ENCODE measurements at regions of chr15 and their contacts with region 1.

Region 1: GRCh38 chr15:94230956-94231722 is at the start of gene MCTP2:
- DNase-seq: peak; percentile 96
- H3K4me3 Mint-ChIP-seq: peak within 1 kb of the TSS; percentile 89
- H3K27ac Mint-ChIP-seq: peak within 1 kb of the TSS; percentile 97
- H3K4me1 Mint-ChIP-seq: peaks cover 69% of the 10 kb centered on the region
- H3K27me3 Mint-ChIP-seq: no peaks in the 10 kb centered on the region
- total RNA-seq, gene MCTP2: 49.8 and 58.9 TPM in 2 replicates

Region 2: GRCh38 chr15:92808978-92809879 is 1421.9 kb before region 1 on chr15:
- intact Hi-C with region 1: loop called (anchors 10 kb)
- DNase-seq: peak; percentile 100
- H3K4me3 Mint-ChIP-seq: peak overlapping the region; percentile 89
- H3K27ac Mint-ChIP-seq: peak overlapping the region; percentile 98
- H3K4me1 Mint-ChIP-seq: peaks cover 45% of the 10 kb centered on the region
- H3K27me3 Mint-ChIP-seq: no peaks in the 10 kb centered on the region

Region 3: GRCh38 chr15:93882141-93882540 is 349.0 kb before region 1 on chr15:
- intact Hi-C with region 1: no loop called
- DNase-seq: no peak
- H3K4me3 Mint-ChIP-seq: no peak overlapping the region
- H3K27ac Mint-ChIP-seq: no peak overlapping the region
- H3K4me1 Mint-ChIP-seq: no peaks in the 10 kb centered on the region
- H3K27me3 Mint-ChIP-seq: peaks cover 4% of the 10 kb centered on the region

Region 4: DNA sequence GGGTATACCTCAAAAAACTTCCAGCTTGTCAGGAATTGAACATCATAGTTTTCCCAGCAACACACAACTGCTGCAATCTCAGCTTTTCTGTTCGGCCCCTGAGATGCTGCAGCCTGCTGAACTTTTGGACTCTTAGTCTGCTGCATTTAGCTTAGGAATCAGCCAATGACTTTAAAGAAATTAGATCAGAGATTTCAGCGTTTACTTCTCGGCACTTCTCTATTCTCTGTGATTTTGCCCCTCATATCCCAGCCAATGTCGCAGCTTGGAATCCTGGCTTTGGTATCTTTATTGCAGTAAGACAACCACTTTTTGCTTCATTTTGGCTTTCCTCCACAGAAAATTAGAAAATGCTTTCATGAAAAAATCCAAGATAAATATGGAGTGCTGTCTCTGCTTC is 86.1 kb before region 1 on chr15:
- intact Hi-C with region 1: no loop called
- DNase-seq: no peak
- H3K4me3 Mint-ChIP-seq: no peak overlapping the region
- H3K27ac Mint-ChIP-seq: no peak overlapping the region
- H3K4me1 Mint-ChIP-seq: no peaks in the 10 kb centered on the region
- H3K27me3 Mint-ChIP-seq: peaks cover 38% of the 10 kb centered on the region

Region 5: DNA sequence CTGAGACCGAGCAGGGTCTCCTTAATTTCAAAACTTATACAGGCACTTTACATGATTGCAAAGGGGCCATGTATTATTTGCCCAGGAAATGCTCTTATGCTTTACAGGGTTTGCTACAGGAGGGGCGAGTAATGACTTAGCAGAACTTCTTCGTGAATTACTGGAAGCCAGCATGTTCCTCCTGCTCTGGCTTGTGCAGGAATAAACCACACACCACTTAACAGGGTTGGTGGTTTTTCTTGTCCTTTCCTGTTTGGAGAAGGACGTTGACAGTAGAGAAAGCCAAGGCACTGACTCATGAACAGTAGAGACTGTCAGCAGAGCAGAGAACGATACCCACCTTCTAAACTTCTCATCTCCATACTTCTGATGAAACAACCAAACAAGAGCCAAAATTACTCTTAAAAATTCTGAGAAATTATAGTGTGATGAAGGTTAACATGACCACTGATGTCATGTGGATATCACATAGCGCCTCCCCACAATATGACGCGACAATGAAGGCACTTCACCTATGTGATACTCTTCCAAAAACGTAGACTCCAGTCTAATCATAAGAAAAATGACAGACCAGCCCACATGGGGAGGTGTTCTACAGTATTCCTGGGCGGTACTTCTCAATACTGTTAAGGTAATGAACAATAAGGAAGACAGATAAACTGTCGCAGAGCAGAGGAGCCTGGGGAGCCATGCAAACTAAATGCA is 24.5 kb before region 1 on chr15:
- intact Hi-C with region 1: loop called (anchors 1 kb)
- DNase-seq: peak; percentile 89
- H3K4me3 Mint-ChIP-seq: peak overlapping the region; percentile 80
- H3K27ac Mint-ChIP-seq: peak overlapping the region; percentile 96
- H3K4me1 Mint-ChIP-seq: peaks cover 27% of the 10 kb centered on the region
- H3K27me3 Mint-ChIP-seq: peaks cover 7% of the 10 kb centered on the region

Region 6: DNA sequence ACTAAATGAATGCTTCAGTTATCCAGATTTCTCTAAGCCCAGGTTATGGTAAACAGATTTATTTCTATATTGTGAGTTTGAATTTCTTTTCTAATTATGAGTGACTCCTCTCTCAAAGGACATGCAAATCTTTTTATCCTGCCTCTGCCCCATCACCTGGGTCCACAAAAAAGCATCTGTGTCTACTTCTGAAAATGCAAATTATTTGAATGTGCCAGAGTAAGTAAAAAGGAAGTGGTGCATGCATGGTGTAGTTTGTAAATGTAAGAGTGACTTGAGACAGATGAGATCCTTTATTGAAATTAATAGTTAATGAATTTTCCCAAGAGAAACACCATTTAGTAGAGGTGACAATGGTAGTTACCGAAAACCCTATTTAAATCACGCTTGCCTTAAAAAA is 27.1 kb after region 1 on chr15:
- intact Hi-C with region 1: no loop called
- DNase-seq: peak; percentile 16
- H3K4me3 Mint-ChIP-seq: no peak overlapping the region
- H3K27ac Mint-ChIP-seq: no peak overlapping the region
- H3K4me1 Mint-ChIP-seq: peaks cover 38% of the 10 kb centered on the region
- H3K27me3 Mint-ChIP-seq: no peaks in the 10 kb centered on the region

Region 7: GRCh38 chr15:94287794-94288246 is 56.7 kb after region 1 on chr15:
- intact Hi-C with region 1: loop called (anchors 5 kb)
- DNase-seq: peak; percentile 89
- H3K4me3 Mint-ChIP-seq: peak overlapping the region; percentile 81
- H3K27ac Mint-ChIP-seq: peak overlapping the region; percentile 86
- H3K4me1 Mint-ChIP-seq: peaks cover 43% of the 10 kb centered on the region
- H3K27me3 Mint-ChIP-seq: no peaks in the 10 kb centered on the region

Region 8: DNA sequence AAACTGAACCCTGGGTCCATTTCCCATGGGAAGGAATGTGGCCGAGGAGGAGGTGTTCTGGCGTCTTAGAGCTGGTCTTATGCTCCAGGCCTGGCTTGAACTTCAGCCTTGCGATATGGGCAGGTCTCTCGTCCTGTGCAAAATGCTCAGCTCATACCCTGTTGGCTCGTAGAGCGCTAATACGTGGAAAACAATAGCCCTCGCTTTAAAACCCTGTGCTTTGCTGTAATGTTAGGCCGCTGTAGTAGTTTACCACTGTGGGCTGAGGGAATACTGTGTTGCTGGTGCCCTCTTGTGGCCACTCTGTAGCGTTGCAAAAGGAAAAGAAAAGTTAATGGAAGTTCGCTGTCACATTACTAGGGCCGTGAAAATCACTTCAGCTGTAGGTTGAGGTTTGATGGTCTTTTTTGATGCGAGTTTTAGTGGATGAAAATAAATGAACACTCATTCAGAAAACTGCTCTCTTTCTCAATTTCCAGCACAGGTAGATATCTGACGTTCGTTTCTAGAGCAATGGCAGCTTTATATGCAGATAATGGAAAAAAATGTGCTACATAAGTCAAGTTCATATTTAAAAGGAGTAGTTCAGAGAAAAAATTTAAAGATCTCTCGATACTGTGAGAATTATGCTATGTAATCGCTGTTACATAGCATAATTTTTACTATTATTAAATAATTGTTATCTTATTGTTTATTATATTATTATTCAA is 93.1 kb after region 1 on chr15:
- intact Hi-C with region 1: loop called (anchors 1 kb)
- DNase-seq: peak; percentile 86
- H3K4me3 Mint-ChIP-seq: peak overlapping the region; percentile 28
- H3K27ac Mint-ChIP-seq: no peak overlapping the region
- H3K4me1 Mint-ChIP-seq: peaks cover 25% of the 10 kb centered on the region
- H3K27me3 Mint-ChIP-seq: no peaks in the 10 kb centered on the region

Region 9: GRCh38 chr15:94451466-94451865 is 220.3 kb after region 1 on chr15:
- intact Hi-C with region 1: no loop called
- DNase-seq: no peak
- H3K4me3 Mint-ChIP-seq: no peak overlapping the region
- H3K27ac Mint-ChIP-seq: no peak overlapping the region
- H3K4me1 Mint-ChIP-seq: no peaks in the 10 kb centered on the region
- H3K27me3 Mint-ChIP-seq: no peaks in the 10 kb centered on the region

Measured in activated CD4-positive, alpha-beta T cell treated with anti-CD3 and anti-CD28 coated beads, Interleukin-2, amount 10 ng/mL, durations not matched to agents 24 days and 14 days (primary cell).